ENCODE measurements at regions of chr4 and their contacts with region 1.

Region 1: GRCh38 chr4:187268940-187269339 is 545.3 kb upstream of the FAT1 start:
- DNase-seq: peak; percentile 85
- ATAC-seq: peak; percentile 96
- H3K4me3 ChIP-seq: no peak overlapping the region
- H3K27ac ChIP-seq: peak overlapping the region; percentile 60; the same call in 1 of the 2 replicates
- H3K4me1 ChIP-seq: peaks cover 4% of the 10 kb centered on the region
- H3K27me3 ChIP-seq: no peaks in the 10 kb centered on the region
- CTCF ChIP-seq: no peak
- POLR2A ChIP-seq: no peak
- RAD21 ChIP-seq: 0 out of 2 replicates have a peak, but pooled peaks have one; percentile 2

Region 2: GRCh38 chr4:187046471-187046870 is 222.5 kb before region 1 on chr4:
- CTCF ChIA-PET with region 1: no interaction called
- POLR2A ChIA-PET with region 1: no interaction called
- dilution Hi-C with region 1: no loop called
- in situ Hi-C with region 1: no loop called
- intact Hi-C with region 1: no loop called
- DNase-seq: no peak
- ATAC-seq: no peak
- H3K4me3 ChIP-seq: no peak overlapping the region
- H3K27ac ChIP-seq: no peak overlapping the region
- H3K4me1 ChIP-seq: no peaks in the 10 kb centered on the region
- H3K27me3 ChIP-seq: no peaks in the 10 kb centered on the region
- CTCF ChIP-seq: no peak
- POLR2A ChIP-seq: no peak
- RAD21 ChIP-seq: no peak

Region 3: GRCh38 chr4:187491959-187492358 is 223.0 kb after region 1 on chr4:
- CTCF ChIA-PET with region 1: no interaction called
- POLR2A ChIA-PET with region 1: no interaction called
- dilution Hi-C with region 1: no loop called
- in situ Hi-C with region 1: no loop called
- intact Hi-C with region 1: no loop called
- DNase-seq: peak; percentile 6
- ATAC-seq: no peak
- H3K4me3 ChIP-seq: no peak overlapping the region
- H3K27ac ChIP-seq: no peak overlapping the region
- H3K4me1 ChIP-seq: no peaks in the 10 kb centered on the region
- H3K27me3 ChIP-seq: no peaks in the 10 kb centered on the region
- CTCF ChIP-seq: no peak
- POLR2A ChIP-seq: no peak
- RAD21 ChIP-seq: no peak

Region 4: DNA sequence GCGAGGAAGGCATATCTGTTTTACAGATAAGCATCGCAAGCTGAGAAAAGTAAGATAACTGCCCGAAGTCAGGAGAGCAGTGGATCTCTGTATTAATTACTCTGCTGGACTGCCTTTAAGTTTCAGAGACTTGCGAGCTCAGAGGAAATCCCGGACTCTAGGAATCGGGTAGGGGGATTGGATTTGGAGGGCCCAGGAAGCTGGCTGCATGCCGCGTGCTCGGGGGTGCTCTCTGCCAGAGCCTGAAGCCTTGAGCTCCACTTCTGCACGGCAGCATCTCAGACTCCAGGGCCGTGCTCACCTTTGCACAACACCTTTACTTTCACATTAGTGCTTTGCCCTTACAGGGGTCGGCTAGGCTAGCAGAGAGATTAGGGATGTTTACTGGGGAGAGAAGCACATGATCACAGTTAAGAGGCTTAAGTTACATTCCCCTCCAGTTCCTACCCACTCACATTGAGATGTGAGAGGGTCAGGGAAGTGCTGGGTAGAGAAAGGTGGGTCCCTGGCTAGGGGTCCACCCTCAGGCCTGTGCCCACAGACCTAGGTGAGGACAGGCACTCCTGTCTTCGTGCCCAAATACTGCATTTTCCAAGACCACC is 927.3 kb after region 1 on chr4:
- CTCF ChIA-PET with region 1: no interaction called
- POLR2A ChIA-PET with region 1: interaction called, 18 read pairs
- dilution Hi-C with region 1: no loop called
- in situ Hi-C with region 1: no loop called
- intact Hi-C with region 1: no loop called
- DNase-seq: no peak
- ATAC-seq: peak; percentile 24
- H3K4me3 ChIP-seq: no peak overlapping the region
- H3K27ac ChIP-seq: no peak overlapping the region
- H3K4me1 ChIP-seq: peaks cover 3% of the 10 kb centered on the region
- H3K27me3 ChIP-seq: no peaks in the 10 kb centered on the region; the same call in 1 of the 2 replicates
- CTCF ChIP-seq: no peak
- POLR2A ChIP-seq: no peak
- RAD21 ChIP-seq: no peak